Aorta (tissue), 5 donors: ENCODE measurements at regions of chr16 and their contacts with region 1.

Region 1: DNA sequence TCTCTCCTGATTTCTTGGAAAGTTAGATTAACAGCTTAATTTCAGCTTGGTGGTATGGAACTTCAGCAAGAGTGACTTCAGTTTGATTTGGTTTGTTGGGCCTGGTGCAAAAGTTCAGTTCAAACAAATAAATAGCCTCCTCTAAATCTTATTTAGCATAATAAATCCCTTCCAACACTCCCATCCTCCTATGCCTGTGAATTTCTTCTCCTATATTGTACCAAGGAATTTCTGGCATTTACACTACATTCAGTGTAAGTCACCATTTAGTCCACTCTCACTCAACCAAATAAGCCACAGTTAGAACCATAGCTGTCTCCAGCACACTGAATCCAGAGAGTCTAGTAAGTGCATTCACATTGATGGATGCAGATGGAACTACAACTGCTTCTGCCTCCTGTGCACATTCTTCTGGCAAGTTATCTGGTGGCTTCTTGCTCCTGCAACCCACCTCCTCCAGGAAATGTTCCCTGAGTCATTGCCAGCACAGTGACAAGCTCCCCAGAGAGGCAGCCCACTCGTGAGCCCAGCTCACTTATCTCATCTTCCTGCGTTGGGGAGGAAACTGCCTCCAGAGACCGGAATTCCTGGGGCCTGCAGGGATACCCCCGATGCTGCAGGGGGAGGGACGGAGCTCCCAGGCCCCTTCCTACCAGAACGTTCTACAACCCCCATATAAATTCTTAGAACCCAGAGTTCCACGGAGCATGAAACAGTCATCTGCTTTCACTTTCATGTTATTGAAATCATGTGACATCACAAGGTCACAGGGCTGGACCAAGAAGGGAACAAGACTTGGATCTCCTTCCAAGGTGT is 318.3 kb downstream of the PHKB start:
- DNase-seq: no peak
- ATAC-seq: no peak
- H3K4me3 ChIP-seq: no peak overlapping the region
- H3K27ac ChIP-seq: no peak overlapping the region
- H3K4me1 ChIP-seq: no peaks in the 10 kb centered on the region
- H3K27me3 ChIP-seq: no peaks in the 10 kb centered on the region

Region 2: GRCh38 chr16:47728205-47728604 is 51.2 kb before region 1 on chr16:
- intact Hi-C with region 1: loop called in 1 of 2 experiments (anchors 5 kb)
- DNase-seq: no peak
- ATAC-seq: no peak
- H3K4me3 ChIP-seq: no peak overlapping the region
- H3K27ac ChIP-seq: no peak overlapping the region
- H3K4me1 ChIP-seq: no peaks in the 10 kb centered on the region
- H3K27me3 ChIP-seq: peaks cover 0 to 1% of the 10 kb centered on the region in 2 donors